Heart right ventricle (tissue), 16 donors: ENCODE measurements at regions of chr15 and their contacts with region 1.

Region 1: DNA sequence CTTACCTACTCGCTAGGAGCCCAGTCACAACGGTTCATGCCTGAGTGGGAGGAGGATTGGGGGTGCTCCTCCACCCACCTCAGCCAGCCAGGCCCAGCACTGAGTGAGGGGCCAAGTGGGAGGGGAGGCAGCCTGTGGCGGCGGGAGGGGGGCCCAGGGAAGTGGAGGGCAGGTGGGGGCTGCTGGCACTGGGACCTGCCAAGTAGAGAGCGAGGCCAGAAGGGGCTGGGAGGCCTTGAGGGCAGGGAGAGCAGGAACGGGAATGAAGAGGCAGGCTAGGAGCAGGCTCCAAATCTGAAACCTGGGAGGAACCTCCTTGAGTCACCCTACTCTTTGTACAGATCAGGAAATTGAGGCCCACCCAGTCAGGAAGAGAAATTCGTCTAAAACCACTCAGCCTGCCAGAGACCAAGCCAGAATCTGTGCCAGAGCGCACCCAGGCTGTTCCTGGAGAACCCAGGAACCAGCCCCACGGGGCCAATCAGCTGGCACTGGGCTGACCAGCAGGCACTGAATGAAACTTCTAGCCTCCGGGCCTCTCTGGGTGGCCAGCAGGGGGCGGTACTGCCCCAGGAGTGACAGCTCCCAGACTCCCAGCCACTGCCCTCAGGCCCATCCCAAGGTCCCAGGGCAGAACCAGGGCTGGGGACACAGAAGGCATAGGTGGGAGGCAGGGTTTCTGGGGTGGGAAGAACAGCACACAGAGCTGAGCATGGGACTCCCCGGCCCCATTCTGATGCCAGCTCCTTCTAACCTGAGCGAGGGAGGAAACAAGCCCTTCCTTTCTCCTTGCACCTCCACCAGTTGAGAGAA is 14.8 kb upstream of the CYP11A1 start:
- DNase-seq: peak; percentile 84 to 86
- ATAC-seq: peak; percentile 82 to 91 (median 86)
- H3K4me3 ChIP-seq: no peak overlapping the region
- H3K27ac ChIP-seq: no peak overlapping the region
- H3K4me1 ChIP-seq: peaks cover 8 to 44% (median 28%) of the 10 kb centered on the region in 9 donors
- H3K27me3 ChIP-seq: no peaks in the 10 kb centered on the region
- CTCF ChIP-seq: peak; percentile 90 to 98 (median 96)

Region 2: GRCh38 chr15:74222240-74223119 is 159.7 kb before region 1 on chr15:
- intact Hi-C with region 1: no loop called
- DNase-seq: no peak
- ATAC-seq: no peak
- H3K4me3 ChIP-seq: no peak overlapping the region
- H3K27ac ChIP-seq: no peak overlapping the region
- H3K4me1 ChIP-seq: peaks cover 0 to 11% (median 0%) of the 10 kb centered on the region in 9 donors
- H3K27me3 ChIP-seq: peaks cover 0 to 15% (median 4%) of the 10 kb centered on the region in 7 donors
- CTCF ChIP-seq: no peak

Region 3: DNA sequence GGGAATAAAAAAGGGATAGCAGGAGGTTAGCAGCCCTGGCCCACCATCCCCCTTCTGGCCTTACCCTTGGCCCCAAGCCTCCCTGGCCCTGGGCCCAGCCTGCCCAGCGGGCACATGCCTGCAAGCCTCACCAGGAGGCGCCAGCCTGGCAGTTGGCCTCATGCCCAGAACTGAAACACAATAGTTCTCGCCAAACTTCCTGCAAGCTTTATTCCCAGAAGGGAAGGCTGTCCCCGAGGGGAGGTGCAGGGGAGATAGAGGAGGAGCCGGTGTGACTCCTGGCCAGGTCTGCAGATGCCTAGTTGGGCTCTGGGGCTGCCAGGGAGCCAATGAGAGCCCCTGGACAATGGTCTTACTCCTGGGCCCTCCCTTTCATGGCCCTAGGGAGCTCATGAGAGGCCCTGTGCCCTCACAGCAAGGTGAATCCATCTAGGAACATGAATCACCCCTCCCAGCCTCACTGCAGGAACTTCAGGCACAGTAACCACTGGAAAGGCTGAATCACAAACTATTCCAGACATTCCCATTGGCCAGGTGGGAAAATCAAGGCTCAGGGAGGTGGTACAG is 142.1 kb before region 1 on chr15:
- intact Hi-C with region 1: no loop called
- DNase-seq: peak; percentile 88 to 91
- ATAC-seq: peak; percentile 83 to 95 (median 90)
- H3K4me3 ChIP-seq: no peak overlapping the region
- H3K27ac ChIP-seq: peak overlapping the region in 9 of 10 donors; percentile 26 to 75 (median 61)
- H3K4me1 ChIP-seq: peaks cover 23 to 43% (median 39%) of the 10 kb centered on the region in 9 donors
- H3K27me3 ChIP-seq: peaks cover 0 to 7% (median 0%) of the 10 kb centered on the region in 7 donors
- CTCF ChIP-seq: peak in 8 of 9 donors; percentile 29 to 70 (median 52)

Region 4: DNA sequence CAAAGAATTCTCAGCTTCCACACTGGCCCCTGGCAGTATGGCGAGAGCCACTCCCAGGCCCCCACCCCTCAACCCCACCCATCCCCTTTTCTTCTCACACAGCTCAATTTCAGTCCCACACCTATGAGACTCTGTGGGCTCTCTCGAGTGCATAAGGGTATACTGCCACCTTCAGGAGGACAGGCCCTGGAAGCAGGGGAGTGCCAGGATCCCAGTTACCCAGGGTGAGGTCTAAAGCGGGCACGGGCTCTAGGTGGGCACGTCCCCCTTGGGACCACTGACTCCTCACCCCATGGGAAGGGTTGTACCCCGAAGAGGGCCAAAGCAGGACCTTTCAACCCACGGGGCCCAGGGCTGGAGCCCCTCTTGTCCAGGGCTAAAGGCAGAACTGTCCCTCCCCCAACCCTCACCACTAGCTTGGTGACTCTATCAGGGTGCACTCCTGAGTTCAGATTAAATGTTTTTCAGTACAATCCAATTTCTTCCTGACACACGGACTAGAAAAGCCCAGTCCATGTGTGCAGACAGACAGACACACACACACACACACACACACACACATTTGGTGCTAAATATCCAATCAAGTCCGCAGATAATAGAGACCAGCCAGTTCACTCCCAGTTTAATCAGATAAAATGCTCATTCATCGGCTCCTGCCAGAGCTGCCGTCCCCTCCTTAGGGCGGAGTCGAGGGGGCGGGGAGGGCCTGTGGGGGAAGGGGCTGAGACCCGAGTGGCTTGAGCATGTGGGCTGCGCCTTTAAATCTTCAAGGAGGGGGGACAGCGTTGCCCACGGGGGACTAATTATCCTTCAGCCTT is 74.2 kb before region 1 on chr15:
- intact Hi-C with region 1: no loop called
- DNase-seq: peak; percentile 41 to 66
- ATAC-seq: peak; percentile 76 to 87 (median 82)
- H3K4me3 ChIP-seq: no peak overlapping the region
- H3K27ac ChIP-seq: no peak overlapping the region
- H3K4me1 ChIP-seq: peaks cover 0 to 8% (median 0%) of the 10 kb centered on the region in 9 donors
- H3K27me3 ChIP-seq: peaks cover 0 to 55% (median 32%) of the 10 kb centered on the region in 7 donors
- CTCF ChIP-seq: peak; percentile 45 to 79 (median 75)

Region 5: GRCh38 chr15:74433592-74434262 is 51.5 kb after region 1 on chr15 and contains the start of gene SEMA7A:
- intact Hi-C with region 1: loop called (anchors 1 to 5 kb)
- DNase-seq: peak; percentile 79 to 84
- ATAC-seq: peak; percentile 89 to 94 (median 92)
- H3K4me3 ChIP-seq: peak within 1 kb of the TSS; percentile 61 to 91 (median 86)
- H3K27ac ChIP-seq: peak within 1 kb of the TSS in 9 of 10 donors; percentile 16 to 85 (median 58)
- H3K4me1 ChIP-seq: peaks cover 4 to 40% (median 16%) of the 10 kb centered on the region in 9 donors
- H3K27me3 ChIP-seq: peaks cover 0 to 26% (median 7%) of the 10 kb centered on the region in 7 donors
- CTCF ChIP-seq: no peak
- total RNA-seq, gene SEMA7A: 0.61 to 5.1 (median 1.8) TPM

Region 6: DNA sequence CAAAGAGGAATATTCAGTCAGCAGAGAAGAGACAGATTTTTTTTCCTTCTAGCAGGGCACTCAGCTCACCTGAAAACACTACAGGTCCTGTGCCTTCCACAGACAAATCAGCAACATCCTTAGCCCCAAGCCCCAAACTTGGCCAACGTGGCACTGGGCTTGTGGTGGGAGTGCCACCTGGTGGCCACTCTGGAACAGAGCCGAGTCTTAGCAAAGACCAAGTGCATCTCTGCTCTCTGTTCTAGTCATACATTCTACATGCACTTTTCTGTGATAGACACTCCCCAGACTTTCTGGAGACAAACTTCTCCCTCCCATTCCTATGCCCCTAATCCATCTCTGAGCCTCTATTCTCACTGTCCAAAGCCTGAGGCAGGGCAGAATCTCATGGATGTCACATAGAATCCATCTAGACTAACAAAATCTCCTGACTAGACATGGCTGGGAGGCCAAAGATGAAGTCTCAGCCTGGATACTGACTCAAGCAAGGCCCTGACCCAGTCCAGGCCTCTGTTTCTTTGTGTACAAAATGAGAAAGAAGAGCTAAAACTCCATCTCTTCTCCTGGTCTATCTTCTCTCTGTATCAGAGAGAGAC is 56.6 kb after region 1 on chr15:
- intact Hi-C with region 1: loop called (anchors 1 to 5 kb)
- DNase-seq: peak; percentile 60 to 66
- ATAC-seq: peak; percentile 43 to 73 (median 64)
- H3K4me3 ChIP-seq: no peak overlapping the region
- H3K27ac ChIP-seq: no peak overlapping the region
- H3K4me1 ChIP-seq: peaks cover 0 to 32% (median 8%) of the 10 kb centered on the region in 9 donors
- H3K27me3 ChIP-seq: no peaks in the 10 kb centered on the region
- CTCF ChIP-seq: peak; percentile 82 to 95 (median 92)

Region 7: GRCh38 chr15:74489518-74490338 is 107.5 kb after region 1 on chr15:
- intact Hi-C with region 1: loop called in 3 of 10 experiments (anchors 2 to 5 kb)
- DNase-seq: peak; percentile 29 to 32
- ATAC-seq: peak in 7 of 8 donors; percentile 23 to 68 (median 56)
- H3K4me3 ChIP-seq: no peak overlapping the region
- H3K27ac ChIP-seq: no peak overlapping the region
- H3K4me1 ChIP-seq: no peaks in the 10 kb centered on the region
- H3K27me3 ChIP-seq: no peaks in the 10 kb centered on the region
- CTCF ChIP-seq: peak; percentile 30 to 76 (median 66)

Region 8: GRCh38 chr15:74635228-74635627 is 253.0 kb after region 1 on chr15:
- intact Hi-C with region 1: loop called in 2 of 10 experiments (anchors 5 to 10 kb)
- DNase-seq: peak in 1 of 2 donors; percentile 61
- ATAC-seq: peak; percentile 49 to 78 (median 74)
- H3K4me3 ChIP-seq: no peak overlapping the region
- H3K27ac ChIP-seq: no peak overlapping the region
- H3K4me1 ChIP-seq: peaks cover 0 to 7% (median 0%) of the 10 kb centered on the region in 9 donors
- H3K27me3 ChIP-seq: no peaks in the 10 kb centered on the region
- CTCF ChIP-seq: peak; percentile 66 to 93 (median 87)

Region 9: DNA sequence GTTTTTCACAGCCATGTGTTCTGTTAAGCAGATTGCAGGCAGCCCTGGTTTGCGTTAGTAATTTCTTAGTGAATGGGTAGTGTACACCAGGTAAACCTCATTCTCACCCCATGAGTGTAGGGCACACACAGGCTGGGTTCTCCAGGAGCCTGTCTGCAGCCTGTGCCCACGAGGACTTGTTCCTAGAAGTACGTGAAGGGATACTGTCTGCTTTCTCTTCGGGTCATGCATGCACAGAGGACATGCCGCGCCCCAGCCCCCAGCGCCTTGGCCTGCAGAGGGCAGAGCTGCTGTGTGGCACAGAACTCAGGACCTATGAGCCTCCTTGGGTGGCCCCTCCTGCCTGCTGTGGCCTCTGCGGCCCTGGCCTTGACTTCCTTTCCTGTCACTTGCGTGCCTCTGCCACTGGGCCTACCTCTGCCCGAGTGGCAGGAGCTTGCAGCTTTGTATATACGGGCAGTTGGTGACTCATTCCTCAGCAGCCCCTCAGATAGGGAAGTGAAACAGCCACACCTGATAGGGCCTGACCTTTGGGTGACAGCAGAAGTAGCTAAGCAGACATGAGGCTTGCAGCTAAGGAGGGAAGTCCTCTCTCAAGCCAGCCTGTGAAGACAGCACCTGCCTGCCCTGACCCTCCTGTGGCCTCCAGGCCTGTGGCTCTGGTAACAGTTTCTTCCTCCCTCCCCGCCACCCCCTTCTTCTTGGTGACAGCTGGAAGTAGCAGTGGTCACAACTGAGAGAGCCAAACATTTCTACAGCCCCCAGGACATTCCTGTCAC is 660.7 kb after region 1 on chr15:
- intact Hi-C with region 1: no loop called
- DNase-seq: peak; percentile 83
- ATAC-seq: peak; percentile 44 to 79 (median 68)
- H3K4me3 ChIP-seq: peak overlapping the region in 2 of 10 donors; percentile 28 to 32
- H3K27ac ChIP-seq: peak overlapping the region; percentile 82 to 98 (median 92)
- H3K4me1 ChIP-seq: peaks cover 43 to 92% (median 65%) of the 10 kb centered on the region in 9 donors
- H3K27me3 ChIP-seq: no peaks in the 10 kb centered on the region
- CTCF ChIP-seq: peak; percentile 36 to 79 (median 65)